Activated CD4-positive, alpha-beta memory T cell treated with anti-CD3 and anti-CD28 coated beads for 36 hours (primary cell): ENCODE measurements at regions of chr5 and their contacts with region 1.

Region 1: DNA sequence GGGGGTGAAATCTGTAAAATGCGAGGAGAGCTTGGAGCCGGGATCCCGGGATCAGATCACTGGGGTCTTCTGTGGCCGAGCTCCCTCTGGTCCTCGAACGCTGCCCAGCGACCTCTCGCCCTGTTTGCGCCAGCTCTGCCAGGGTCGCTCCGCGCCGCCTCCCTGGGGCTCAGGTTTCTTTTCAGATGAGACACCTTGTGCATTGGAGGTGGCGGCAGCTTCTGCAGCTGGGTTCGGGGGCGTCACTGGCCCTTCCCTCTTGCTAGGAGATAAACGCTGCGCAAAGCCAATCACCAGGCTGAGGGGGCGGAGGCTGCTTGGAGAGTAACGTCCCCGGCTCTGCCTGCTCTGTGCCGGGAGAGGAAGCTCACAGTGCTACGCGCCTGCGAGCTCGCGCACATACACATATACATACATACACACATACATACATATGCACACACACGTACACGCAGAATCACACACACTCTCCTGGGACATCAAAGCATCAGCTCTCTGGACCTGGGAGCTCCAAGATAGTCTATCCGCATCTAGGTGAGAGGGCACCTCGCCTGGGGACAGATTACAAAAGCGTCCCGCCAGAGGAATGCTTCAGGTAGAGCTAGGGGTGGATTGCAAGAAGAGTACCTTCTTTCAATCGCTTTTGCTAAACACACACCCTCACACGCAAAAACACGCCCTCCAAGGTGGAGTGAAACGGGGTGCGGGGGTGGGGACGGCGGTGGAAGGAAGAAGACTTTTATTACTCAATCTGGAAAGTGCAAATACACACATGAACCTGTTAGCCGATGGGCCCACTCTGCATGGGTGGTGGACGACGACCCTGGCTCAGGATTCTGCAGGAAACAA is at the start of gene ST8SIA4:
- DNase-seq: peak; percentile 95
- H3K4me3 Mint-ChIP-seq: peak within 1 kb of the TSS; percentile 92
- H3K27ac Mint-ChIP-seq: peak within 1 kb of the TSS; percentile 96
- H3K4me1 Mint-ChIP-seq: peaks cover 30% of the 10 kb centered on the region
- H3K27me3 Mint-ChIP-seq: no peaks in the 10 kb centered on the region
- total RNA-seq, gene ST8SIA4: 32.8 to 35.1 TPM

Region 2: DNA sequence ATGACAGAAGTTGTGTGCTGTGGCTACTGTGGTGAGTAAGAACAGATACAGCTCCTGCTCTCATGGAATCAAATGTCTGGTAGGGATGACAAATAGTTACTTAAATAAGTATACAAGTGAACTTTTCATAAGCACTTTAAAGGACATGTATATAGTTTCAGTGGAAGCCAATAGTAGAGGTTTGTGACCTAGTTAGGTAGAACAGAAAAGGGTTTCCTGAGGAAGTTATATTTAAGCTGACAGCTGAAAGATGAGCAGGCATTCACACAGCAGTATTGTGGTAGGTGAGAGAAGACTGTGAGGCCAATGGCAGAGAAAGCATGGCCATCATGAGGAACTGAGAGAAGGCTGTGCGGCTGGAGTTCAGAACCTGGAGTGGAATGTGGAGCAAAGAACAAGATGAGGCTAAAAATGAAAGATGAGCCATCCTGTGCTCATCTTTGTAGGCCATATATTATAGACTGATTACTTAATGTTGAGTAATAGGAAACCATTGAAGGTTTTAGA is 352.7 kb before region 1 on chr5:
- CTCF ChIA-PET with region 1: interaction called, 3 read pairs
- POLR2A ChIA-PET with region 1: interaction called, 3 read pairs
- intact Hi-C with region 1: loop called (anchors 5 kb)
- DNase-seq: peak; percentile 13
- H3K4me3 Mint-ChIP-seq: no peak overlapping the region
- H3K27ac Mint-ChIP-seq: no peak overlapping the region
- H3K4me1 Mint-ChIP-seq: peaks cover 6% of the 10 kb centered on the region
- H3K27me3 Mint-ChIP-seq: no peaks in the 10 kb centered on the region

Region 3: DNA sequence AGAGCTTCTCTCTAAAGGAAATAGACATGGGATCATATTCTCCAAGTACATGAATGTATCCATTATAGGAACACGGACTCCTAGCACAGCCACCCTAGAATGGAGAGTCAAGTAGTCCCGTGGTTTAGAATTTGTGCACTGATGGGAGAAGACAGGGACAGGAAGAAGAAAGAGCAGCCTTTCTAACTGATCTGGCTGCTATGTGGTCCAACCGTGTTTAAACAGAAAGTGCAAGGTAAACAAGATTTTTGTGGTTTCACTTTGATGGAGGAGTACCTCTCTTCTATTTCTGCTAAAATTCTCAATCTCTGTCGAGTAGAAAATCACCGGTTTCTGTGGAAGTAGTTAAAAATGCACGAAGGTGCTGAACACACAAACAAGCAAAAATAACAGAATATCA is 171.5 kb before region 1 on chr5:
- CTCF ChIA-PET with region 1: interaction called, 3 read pairs
- POLR2A ChIA-PET with region 1: no interaction called
- intact Hi-C with region 1: loop called (anchors 2 kb)
- DNase-seq: no peak
- H3K4me3 Mint-ChIP-seq: peak overlapping the region; percentile 66
- H3K27ac Mint-ChIP-seq: peak overlapping the region; percentile 34
- H3K4me1 Mint-ChIP-seq: peaks cover 7% of the 10 kb centered on the region
- H3K27me3 Mint-ChIP-seq: no peaks in the 10 kb centered on the region

Region 4: DNA sequence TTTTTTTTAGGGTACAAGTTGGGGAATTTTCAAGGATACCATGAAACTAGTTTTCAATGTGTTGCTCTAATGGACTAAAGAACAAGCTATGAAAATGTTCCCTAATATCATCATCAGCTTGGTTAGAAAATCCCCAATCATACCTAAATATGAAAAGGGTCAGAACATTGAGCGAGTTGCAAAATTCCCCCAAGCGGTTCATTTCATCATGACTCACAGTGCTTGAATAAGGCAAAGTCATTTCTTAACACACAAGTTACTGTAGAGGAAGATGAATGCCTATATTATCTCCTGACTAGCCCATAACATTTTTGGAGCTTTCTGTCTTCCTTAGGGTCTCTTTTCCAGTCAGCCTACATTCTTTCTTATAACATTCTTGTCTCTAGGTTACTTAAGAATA is 62.9 kb before region 1 on chr5:
- CTCF ChIA-PET with region 1: interaction called, 7 read pairs
- POLR2A ChIA-PET with region 1: interaction called, 86 read pairs
- intact Hi-C with region 1: loop called (anchors 1 kb)
- DNase-seq: peak; percentile 52
- H3K4me3 Mint-ChIP-seq: no peak overlapping the region
- H3K27ac Mint-ChIP-seq: peak overlapping the region; percentile 86
- H3K4me1 Mint-ChIP-seq: peaks cover 67% of the 10 kb centered on the region
- H3K27me3 Mint-ChIP-seq: no peaks in the 10 kb centered on the region

Region 5: GRCh38 chr5:100872408-100873190 is 30.7 kb before region 1 on chr5:
- CTCF ChIA-PET with region 1: interaction called, 3 read pairs
- POLR2A ChIA-PET with region 1: interaction called, 11 read pairs
- intact Hi-C with region 1: loop called (anchors 1 kb)
- DNase-seq: peak; percentile 55
- H3K4me3 Mint-ChIP-seq: no peak overlapping the region
- H3K27ac Mint-ChIP-seq: peak overlapping the region; percentile 73
- H3K4me1 Mint-ChIP-seq: peaks cover 46% of the 10 kb centered on the region
- H3K27me3 Mint-ChIP-seq: no peaks in the 10 kb centered on the region

Region 6: GRCh38 chr5:101482931-101483330 is 579.7 kb after region 1 on chr5:
- CTCF ChIA-PET with region 1: no interaction called
- POLR2A ChIA-PET with region 1: no interaction called
- intact Hi-C with region 1: no loop called
- DNase-seq: no peak
- H3K4me3 Mint-ChIP-seq: no peak overlapping the region
- H3K27ac Mint-ChIP-seq: no peak overlapping the region
- H3K4me1 Mint-ChIP-seq: no peaks in the 10 kb centered on the region
- H3K27me3 Mint-ChIP-seq: no peaks in the 10 kb centered on the region

Region 7: GRCh38 chr5:101605700-101606099 is 702.4 kb after region 1 on chr5:
- CTCF ChIA-PET with region 1: no interaction called
- POLR2A ChIA-PET with region 1: no interaction called
- intact Hi-C with region 1: no loop called
- DNase-seq: no peak
- H3K4me3 Mint-ChIP-seq: no peak overlapping the region
- H3K27ac Mint-ChIP-seq: no peak overlapping the region
- H3K4me1 Mint-ChIP-seq: no peaks in the 10 kb centered on the region
- H3K27me3 Mint-ChIP-seq: no peaks in the 10 kb centered on the region